ENCODE measurements at regions of chr5 and their contacts with region 1.

Region 1: DNA sequence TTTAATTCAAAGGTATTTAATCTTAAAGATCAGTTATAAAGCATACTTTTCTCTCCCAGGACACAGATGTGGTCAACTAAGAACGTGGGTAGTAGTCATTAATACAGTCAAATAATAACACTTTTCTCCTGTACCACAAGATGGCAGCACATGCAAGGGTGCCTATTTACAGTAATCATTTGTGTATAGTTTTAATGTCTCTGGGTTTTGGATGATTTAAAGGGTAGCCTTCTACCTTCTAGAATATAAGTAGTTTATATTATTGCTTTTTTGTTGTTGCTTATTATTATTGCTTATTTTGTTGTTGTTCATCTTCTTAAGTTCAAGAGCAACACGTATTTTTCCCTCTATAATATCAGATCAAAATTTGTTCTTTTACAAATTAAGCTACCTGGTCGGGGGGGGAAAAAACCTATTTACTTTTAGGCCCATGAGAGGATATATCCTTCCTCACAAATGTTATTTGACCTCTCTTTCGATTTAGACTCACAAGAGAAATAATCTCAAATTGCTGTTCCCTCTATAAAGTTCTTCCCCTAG is 59.6 kb upstream of the SLC27A6 start:
- DNase-seq: no peak
- H3K4me3 ChIP-seq: no peak overlapping the region
- H3K27ac ChIP-seq: no peak overlapping the region
- H3K4me1 ChIP-seq: no peaks in the 10 kb centered on the region
- H3K27me3 ChIP-seq: no peaks in the 10 kb centered on the region; a peak in 1 of 7 replicates
- CTCF ChIP-seq: peak in 2 of 3 experiments; percentile 52 to 66; a peak in 2 of 4 replicates
- EP300 ChIP-seq: no peak
- POLR2A ChIP-seq: no peak
- RAD21 ChIP-seq: peak; percentile 86 to 91

Region 2: DNA sequence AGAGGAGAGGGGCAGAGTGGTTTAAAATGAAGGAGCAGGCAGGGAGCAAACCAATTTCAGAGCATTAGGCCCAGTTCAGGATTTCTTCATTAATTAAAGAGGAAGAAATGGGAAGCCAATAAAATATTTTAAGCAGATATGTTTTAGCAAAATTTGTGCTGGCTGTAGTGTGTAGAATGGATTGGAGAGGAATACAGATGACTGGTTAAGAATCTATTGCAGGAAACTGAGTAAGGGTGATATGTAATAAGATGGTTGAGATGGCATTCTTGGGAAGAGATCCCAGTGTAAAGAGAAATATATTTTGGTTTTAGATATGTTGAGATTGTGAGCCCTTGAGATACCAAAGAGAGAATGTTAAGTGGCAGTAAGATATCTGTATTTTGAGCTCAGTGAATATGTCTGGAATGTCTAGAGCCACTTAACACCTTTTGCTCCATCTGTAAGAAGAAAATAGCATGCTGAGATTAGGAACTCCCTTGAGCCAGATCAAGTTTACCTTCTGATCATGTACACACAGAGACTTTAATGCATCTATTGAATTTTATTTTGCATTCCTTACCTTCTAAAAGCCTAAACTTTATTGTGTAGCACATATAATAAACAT is 19.9 kb before region 1 on chr5:
- CTCF ChIA-PET with region 1: interaction called, 10 read pairs
- POLR2A ChIA-PET with region 1: no interaction called
- DNase-seq: no peak
- H3K4me3 ChIP-seq: no peak overlapping the region
- H3K27ac ChIP-seq: no peak overlapping the region
- H3K4me1 ChIP-seq: no peaks in the 10 kb centered on the region
- H3K27me3 ChIP-seq: no peaks in the 10 kb centered on the region
- CTCF ChIP-seq: no peak
- EP300 ChIP-seq: no peak
- POLR2A ChIP-seq: no peak
- RAD21 ChIP-seq: no peak

Region 3: DNA sequence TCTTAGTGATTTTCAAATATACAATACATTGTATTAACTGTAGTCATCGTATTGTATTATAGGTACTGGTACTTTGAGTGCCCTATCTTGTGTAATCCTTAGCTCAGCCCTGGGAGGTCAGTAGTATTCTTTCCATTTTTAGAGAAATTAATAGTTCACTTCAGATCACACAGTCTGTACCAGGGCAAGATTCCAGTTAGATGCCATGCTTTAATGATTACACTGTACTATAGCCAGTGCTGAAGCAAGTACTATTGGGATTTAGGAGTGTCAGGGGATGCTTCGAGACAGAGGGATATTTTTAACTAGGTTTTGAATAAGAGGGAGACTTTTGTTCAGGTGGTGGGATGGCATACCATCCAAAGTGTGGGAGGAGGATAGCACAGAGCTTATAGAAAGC is 18.7 kb after region 1 on chr5:
- CTCF ChIA-PET with region 1: interaction called, 15 read pairs
- POLR2A ChIA-PET with region 1: no interaction called
- DNase-seq: no peak
- H3K4me3 ChIP-seq: no peak overlapping the region
- H3K27ac ChIP-seq: no peak overlapping the region
- H3K4me1 ChIP-seq: no peaks in the 10 kb centered on the region
- H3K27me3 ChIP-seq: no peaks in the 10 kb centered on the region
- CTCF ChIP-seq: no peak
- EP300 ChIP-seq: no peak
- POLR2A ChIP-seq: no peak
- RAD21 ChIP-seq: no peak

Region 4: DNA sequence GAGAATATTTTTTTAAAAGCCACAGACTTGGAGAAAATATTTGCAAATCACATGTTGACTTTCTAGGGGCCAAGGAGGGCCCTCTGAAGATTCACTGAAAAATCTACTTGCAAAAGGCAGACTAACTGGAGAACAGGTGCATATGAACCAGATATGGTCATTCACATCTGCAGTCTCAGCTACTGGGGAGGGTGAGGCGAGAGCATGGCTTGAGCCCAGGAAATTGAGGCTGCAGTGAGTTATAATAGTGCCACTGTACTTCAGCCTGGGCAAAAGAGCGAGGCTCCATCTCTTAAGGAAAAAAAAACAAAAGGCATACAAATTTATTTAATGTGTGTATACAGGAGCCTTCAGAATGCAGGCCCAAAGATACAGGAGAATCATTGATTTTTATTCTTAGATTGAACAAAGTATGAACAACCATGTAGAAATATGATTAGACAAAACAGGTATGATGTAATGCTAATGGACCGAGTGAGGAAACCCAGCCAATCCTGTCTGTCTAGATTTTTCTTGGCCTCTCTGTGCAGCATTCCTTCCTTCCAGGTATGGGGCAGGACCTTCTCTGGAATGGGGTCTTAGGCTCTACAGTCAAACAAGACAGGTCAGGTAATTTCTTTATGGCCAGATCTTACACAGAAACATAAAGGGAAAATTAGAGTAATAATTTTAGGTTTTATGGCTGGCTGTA is 44.4 kb after region 1 on chr5:
- CTCF ChIA-PET with region 1: no interaction called
- POLR2A ChIA-PET with region 1: no interaction called
- DNase-seq: no peak
- H3K4me3 ChIP-seq: no peak overlapping the region
- H3K27ac ChIP-seq: no peak overlapping the region
- H3K4me1 ChIP-seq: no peaks in the 10 kb centered on the region
- H3K27me3 ChIP-seq: no peaks in the 10 kb centered on the region
- CTCF ChIP-seq: no peak
- EP300 ChIP-seq: no peak
- POLR2A ChIP-seq: no peak
- RAD21 ChIP-seq: no peak

Region 5: GRCh38 chr5:129003226-129003625 is 97.6 kb after region 1 on chr5:
- CTCF ChIA-PET with region 1: no interaction called
- POLR2A ChIA-PET with region 1: no interaction called
- DNase-seq: no peak
- H3K4me3 ChIP-seq: no peak overlapping the region
- H3K27ac ChIP-seq: no peak overlapping the region
- H3K4me1 ChIP-seq: peaks cover 0 to 8% (median 2%) of the 10 kb centered on the region in 4 experiments; a peak in 2 of 7 replicates
- H3K27me3 ChIP-seq: no peaks in the 10 kb centered on the region
- CTCF ChIP-seq: no peak
- EP300 ChIP-seq: no peak
- POLR2A ChIP-seq: no peak
- RAD21 ChIP-seq: no peak

Region 6: GRCh38 chr5:129125810-129126209 is 220.2 kb after region 1 on chr5:
- CTCF ChIA-PET with region 1: interaction called, 27 read pairs
- POLR2A ChIA-PET with region 1: no interaction called
- DNase-seq: no peak
- H3K4me3 ChIP-seq: no peak overlapping the region
- H3K27ac ChIP-seq: no peak overlapping the region
- H3K4me1 ChIP-seq: no peaks in the 10 kb centered on the region
- H3K27me3 ChIP-seq: no peaks in the 10 kb centered on the region
- CTCF ChIP-seq: no peak
- EP300 ChIP-seq: no peak
- POLR2A ChIP-seq: no peak
- RAD21 ChIP-seq: no peak

Region 7: DNA sequence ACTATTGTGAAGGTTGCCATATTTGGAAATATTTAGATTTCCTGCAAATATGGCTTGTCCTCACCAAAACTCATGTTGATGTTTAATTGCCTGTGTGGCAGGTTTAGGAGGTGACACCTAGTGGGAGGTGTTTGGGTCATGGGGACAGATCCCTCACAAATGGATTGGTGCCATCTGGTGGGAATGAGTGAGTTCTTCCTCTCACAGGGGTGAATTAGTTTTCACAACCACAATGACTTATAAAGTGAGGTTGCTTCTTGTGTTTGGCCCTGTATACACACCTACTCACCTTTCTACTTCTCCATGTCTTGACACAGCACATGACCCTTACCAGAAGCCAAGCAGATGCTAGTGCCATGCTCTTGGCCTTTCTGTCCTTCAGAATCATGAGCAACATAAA is 230.0 kb after region 1 on chr5:
- CTCF ChIA-PET with region 1: interaction called, 43 read pairs
- POLR2A ChIA-PET with region 1: no interaction called
- DNase-seq: no peak
- H3K4me3 ChIP-seq: no peak overlapping the region
- H3K27ac ChIP-seq: no peak overlapping the region
- H3K4me1 ChIP-seq: no peaks in the 10 kb centered on the region
- H3K27me3 ChIP-seq: no peaks in the 10 kb centered on the region
- CTCF ChIP-seq: peak; percentile 35 to 77 (median 59)
- EP300 ChIP-seq: no peak
- POLR2A ChIP-seq: no peak
- RAD21 ChIP-seq: peak; percentile 74 to 76